ENCODE measurements at regions of chr12 and their contacts with region 1.

Region 1: DNA sequence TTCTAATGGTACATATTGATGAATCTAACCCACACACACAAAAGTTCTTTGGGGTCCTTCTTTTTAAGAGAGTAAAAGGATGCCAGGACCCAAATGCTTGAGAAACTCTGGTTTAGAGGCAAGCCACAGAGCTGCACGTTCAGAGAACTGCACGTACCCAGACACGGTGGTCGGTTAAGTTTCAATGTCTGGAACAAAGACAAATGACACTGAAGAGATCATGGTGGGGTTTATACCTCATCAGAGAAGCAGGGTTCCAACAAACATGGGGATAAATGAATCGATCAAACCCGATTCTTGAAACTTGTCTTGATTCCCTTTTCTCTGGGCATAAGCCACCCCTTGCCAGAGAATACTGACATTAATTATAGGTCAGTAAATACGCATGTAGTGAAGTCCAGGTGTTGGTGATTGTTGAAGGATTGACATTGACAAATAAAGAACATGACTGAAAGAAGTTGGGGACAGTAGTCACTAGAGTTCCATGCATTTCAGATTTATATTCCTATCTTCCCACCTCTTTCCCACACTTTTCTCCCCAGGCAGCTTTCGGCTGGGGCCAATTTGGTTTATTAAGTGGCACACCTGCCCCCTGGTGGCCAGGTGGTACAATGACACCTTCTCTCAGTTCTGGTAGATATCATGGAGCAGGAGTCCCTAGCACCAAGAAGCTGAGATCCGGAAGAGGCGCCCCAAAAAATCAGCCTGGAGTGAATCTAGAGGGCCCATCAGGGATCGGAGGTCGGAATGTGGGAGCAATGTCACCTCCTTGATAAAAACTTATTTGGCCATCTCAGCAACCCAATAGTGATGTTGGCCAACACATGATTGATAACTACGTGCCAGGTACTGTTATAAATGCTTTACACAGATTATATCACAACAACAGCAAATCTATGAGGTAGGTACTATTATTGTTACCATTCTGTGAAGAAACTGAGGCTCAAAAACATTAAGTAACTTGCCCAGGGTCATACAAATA is 17.8 kb upstream of the HDAC7 start:
- DNase-seq: peak; percentile 54
- ATAC-seq: peak; percentile 73
- H3K4me3 ChIP-seq: no peak overlapping the region
- H3K27ac ChIP-seq: no peak overlapping the region
- H3K4me1 ChIP-seq: no peaks in the 10 kb centered on the region; the same call in 1 of the 2 replicates
- H3K27me3 ChIP-seq: peaks cover 6 to 11% of the 10 kb centered on the region in 2 experiments; a peak in 3 of 5 replicates
- CTCF ChIP-seq: peak; percentile 84
- EP300 ChIP-seq: no peak
- POLR2A ChIP-seq: no peak
- RAD21 ChIP-seq: peak; percentile 57; the same call in 1 of the 2 replicates

Region 2: DNA sequence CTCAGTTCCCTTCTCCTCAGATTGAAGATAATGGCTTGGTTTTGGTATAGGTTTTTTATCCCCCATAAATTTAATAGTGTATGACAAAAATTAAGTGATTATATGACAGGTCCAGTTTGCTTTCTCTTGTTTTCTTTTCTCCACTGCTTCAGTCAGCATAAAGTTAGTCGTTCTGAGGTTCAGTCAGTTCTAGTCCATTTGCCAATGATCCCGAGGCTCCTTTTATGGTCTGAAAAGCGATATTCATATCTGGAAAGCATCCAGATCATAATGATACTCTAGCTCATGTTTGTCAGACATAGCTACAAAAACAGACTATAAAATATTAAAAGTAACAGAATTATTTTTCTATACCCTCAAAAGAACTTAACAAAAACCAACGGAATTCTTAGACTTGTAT is 944.6 kb before region 1 on chr12:
- CTCF ChIA-PET with region 1: no interaction called
- POLR2A ChIA-PET with region 1: no interaction called
- in situ Hi-C with region 1: no loop called
- intact Hi-C with region 1: no loop called
- DNase-seq: no peak
- ATAC-seq: no peak
- H3K4me3 ChIP-seq: no peak overlapping the region
- H3K27ac ChIP-seq: no peak overlapping the region
- H3K4me1 ChIP-seq: no peaks in the 10 kb centered on the region
- H3K27me3 ChIP-seq: no peaks in the 10 kb centered on the region; a peak in 1 of 5 replicates
- CTCF ChIP-seq: no peak
- EP300 ChIP-seq: no peak
- POLR2A ChIP-seq: no peak
- RAD21 ChIP-seq: no peak

Region 3: GRCh38 chr12:47689215-47689614 is 148.3 kb before region 1 on chr12:
- CTCF ChIA-PET with region 1: no interaction called
- POLR2A ChIA-PET with region 1: no interaction called
- in situ Hi-C with region 1: no loop called
- intact Hi-C with region 1: no loop called
- DNase-seq: no peak
- ATAC-seq: no peak
- H3K4me3 ChIP-seq: no peak overlapping the region
- H3K27ac ChIP-seq: no peak overlapping the region
- H3K4me1 ChIP-seq: no peaks in the 10 kb centered on the region
- H3K27me3 ChIP-seq: no peaks in the 10 kb centered on the region
- CTCF ChIP-seq: no peak
- EP300 ChIP-seq: no peak
- POLR2A ChIP-seq: no peak
- RAD21 ChIP-seq: no peak

Region 4: DNA sequence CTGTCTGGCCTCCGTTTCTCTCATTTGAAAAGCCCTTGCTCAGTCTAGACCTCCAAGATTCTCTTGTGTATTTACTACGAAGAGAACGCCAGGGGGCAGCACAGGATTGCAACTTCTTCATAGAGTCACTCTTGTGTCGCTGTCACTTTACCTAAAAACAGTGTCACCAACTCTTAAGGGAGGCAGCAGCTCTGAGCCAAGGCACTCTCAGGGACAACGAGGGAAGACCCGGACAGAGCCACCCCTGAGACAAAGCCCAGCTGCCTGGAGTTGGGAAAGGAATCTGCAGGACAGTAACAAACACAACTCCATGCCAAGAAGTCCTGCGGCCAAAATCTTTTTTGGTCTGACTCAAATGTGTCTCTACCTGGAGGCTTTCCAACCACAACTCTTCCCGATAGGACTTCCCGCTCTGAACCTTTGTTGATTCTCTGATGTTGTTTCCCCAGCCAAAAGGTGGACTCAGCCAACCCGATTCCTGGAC is 122.0 kb before region 1 on chr12:
- CTCF ChIA-PET with region 1: interaction called, 26 read pairs
- POLR2A ChIA-PET with region 1: no interaction called
- in situ Hi-C with region 1: loop called (anchors 5 kb)
- intact Hi-C with region 1: loop called (anchors 1 kb)
- DNase-seq: peak; percentile 76
- ATAC-seq: peak; percentile 75
- H3K4me3 ChIP-seq: no peak overlapping the region
- H3K27ac ChIP-seq: no peak overlapping the region
- H3K4me1 ChIP-seq: peaks cover 12% of the 10 kb centered on the region
- H3K27me3 ChIP-seq: no peaks in the 10 kb centered on the region; a peak in 1 of 5 replicates
- CTCF ChIP-seq: peak; percentile 87
- EP300 ChIP-seq: no peak
- POLR2A ChIP-seq: no peak
- RAD21 ChIP-seq: peak; percentile 62

Region 5: GRCh38 chr12:47742253-47742825 is 95.1 kb before region 1 on chr12:
- CTCF ChIA-PET with region 1: interaction called, 21 read pairs
- POLR2A ChIA-PET with region 1: no interaction called
- in situ Hi-C with region 1: no loop called
- intact Hi-C with region 1: loop called (anchors 1 kb)
- DNase-seq: peak; percentile 19
- ATAC-seq: no peak
- H3K4me3 ChIP-seq: no peak overlapping the region
- H3K27ac ChIP-seq: no peak overlapping the region
- H3K4me1 ChIP-seq: peaks cover 24% of the 10 kb centered on the region
- H3K27me3 ChIP-seq: peaks cover 9 to 49% of the 10 kb centered on the region in 2 experiments
- CTCF ChIP-seq: peak; percentile 89
- EP300 ChIP-seq: no peak
- POLR2A ChIP-seq: no peak
- RAD21 ChIP-seq: peak; percentile 72

Region 6: GRCh38 chr12:47779301-47779942 is 58.1 kb before region 1 on chr12:
- CTCF ChIA-PET with region 1: interaction called, 6 read pairs
- POLR2A ChIA-PET with region 1: no interaction called
- in situ Hi-C with region 1: no loop called
- intact Hi-C with region 1: loop called (anchors 1 kb)
- DNase-seq: peak; percentile 69
- ATAC-seq: peak; percentile 87
- H3K4me3 ChIP-seq: no peak overlapping the region
- H3K27ac ChIP-seq: no peak overlapping the region
- H3K4me1 ChIP-seq: peaks cover 23% of the 10 kb centered on the region
- H3K27me3 ChIP-seq: no peaks in the 10 kb centered on the region
- CTCF ChIP-seq: peak; percentile 93
- EP300 ChIP-seq: no peak
- POLR2A ChIP-seq: no peak
- RAD21 ChIP-seq: peak; percentile 90

Region 7: GRCh38 chr12:47785036-47785886 is 52.2 kb before region 1 on chr12:
- CTCF ChIA-PET with region 1: no interaction called
- POLR2A ChIA-PET with region 1: no interaction called
- in situ Hi-C with region 1: loop called (anchors 5 kb)
- intact Hi-C with region 1: no loop called
- DNase-seq: no peak
- ATAC-seq: no peak
- H3K4me3 ChIP-seq: no peak overlapping the region
- H3K27ac ChIP-seq: no peak overlapping the region
- H3K4me1 ChIP-seq: no peaks in the 10 kb centered on the region
- H3K27me3 ChIP-seq: no peaks in the 10 kb centered on the region
- CTCF ChIP-seq: no peak
- EP300 ChIP-seq: no peak
- POLR2A ChIP-seq: no peak
- RAD21 ChIP-seq: no peak

Region 8: DNA sequence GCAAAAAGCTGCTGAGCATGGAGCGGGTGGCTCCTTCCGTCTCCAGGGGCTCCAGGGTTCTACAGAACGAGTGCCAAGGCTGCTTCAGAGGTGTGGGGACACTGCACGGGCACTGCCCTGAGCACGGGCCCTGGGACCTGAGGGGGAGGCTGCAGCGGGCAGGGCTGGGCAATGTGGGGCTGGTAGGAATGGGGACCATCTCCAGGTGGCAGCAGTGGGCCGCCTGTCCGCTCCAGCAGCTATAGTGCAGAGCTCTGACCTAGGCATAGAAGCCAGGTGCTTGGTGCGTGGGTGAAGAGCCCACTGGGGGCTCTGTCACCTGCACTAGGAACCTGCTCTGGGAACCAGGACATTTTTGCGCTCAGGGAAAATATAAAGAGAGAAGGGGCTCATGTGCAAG is 40.0 kb before region 1 on chr12:
- CTCF ChIA-PET with region 1: interaction called, 33 read pairs
- POLR2A ChIA-PET with region 1: no interaction called
- in situ Hi-C with region 1: no loop called
- intact Hi-C with region 1: loop called (anchors 1 kb)
- DNase-seq: no peak
- ATAC-seq: peak; percentile 77
- H3K4me3 ChIP-seq: no peak overlapping the region
- H3K27ac ChIP-seq: no peak overlapping the region
- H3K4me1 ChIP-seq: no peaks in the 10 kb centered on the region
- H3K27me3 ChIP-seq: no peaks in the 10 kb centered on the region
- CTCF ChIP-seq: peak; percentile 74
- EP300 ChIP-seq: no peak
- POLR2A ChIP-seq: no peak
- RAD21 ChIP-seq: peak; percentile 80

Region 9: GRCh38 chr12:47819896-47820630 is 17.4 kb before region 1 on chr12 and contains the start of gene HDAC7:
- CTCF ChIA-PET with region 1: interaction called, 4 read pairs
- POLR2A ChIA-PET with region 1: interaction called, 7 read pairs
- in situ Hi-C with region 1: no loop called
- intact Hi-C with region 1: loop called (anchors 1 kb)
- DNase-seq: peak; percentile 62
- ATAC-seq: peak; percentile 47
- H3K4me3 ChIP-seq: peak within 1 kb of the TSS; percentile 69 to 86 (median 78)
- H3K27ac ChIP-seq: peak within 1 kb of the TSS; percentile 65
- H3K4me1 ChIP-seq: peaks cover 49% of the 10 kb centered on the region
- H3K27me3 ChIP-seq: peaks cover 0 to 31% of the 10 kb centered on the region in 2 experiments; a peak in 3 of 5 replicates
- CTCF ChIP-seq: peak; percentile 2; the same call in 1 of the 2 replicates
- EP300 ChIP-seq: no peak
- POLR2A ChIP-seq: peak in 1 of 2 experiments; percentile 56; a peak in 2 of 4 replicates
- RAD21 ChIP-seq: no peak
- total RNA-seq, gene HDAC7: 3.7 and 4.6 TPM in 2 replicates